Dorsolateral prefrontal cortex (tissue), 120 donors: ENCODE measurements at regions of chr3 and their contacts with region 1.

Region 1: GRCh38 chr3:79019137-79019923 is 748.5 kb downstream of the ROBO1 start:
- DNase-seq: peak; percentile 59 to 90 (median 86)
- H3K4me3 ChIP-seq: peak overlapping the region; percentile 35 to 97 (median 85)
- H3K27ac ChIP-seq: peak overlapping the region; percentile 66 to 98 (median 91)
- H3K27me3 ChIP-seq: no peaks in the 10 kb centered on the region
- CTCF ChIP-seq: peak in 8 of 56 donors; percentile 3 to 22 (median 8)

Region 2: DNA sequence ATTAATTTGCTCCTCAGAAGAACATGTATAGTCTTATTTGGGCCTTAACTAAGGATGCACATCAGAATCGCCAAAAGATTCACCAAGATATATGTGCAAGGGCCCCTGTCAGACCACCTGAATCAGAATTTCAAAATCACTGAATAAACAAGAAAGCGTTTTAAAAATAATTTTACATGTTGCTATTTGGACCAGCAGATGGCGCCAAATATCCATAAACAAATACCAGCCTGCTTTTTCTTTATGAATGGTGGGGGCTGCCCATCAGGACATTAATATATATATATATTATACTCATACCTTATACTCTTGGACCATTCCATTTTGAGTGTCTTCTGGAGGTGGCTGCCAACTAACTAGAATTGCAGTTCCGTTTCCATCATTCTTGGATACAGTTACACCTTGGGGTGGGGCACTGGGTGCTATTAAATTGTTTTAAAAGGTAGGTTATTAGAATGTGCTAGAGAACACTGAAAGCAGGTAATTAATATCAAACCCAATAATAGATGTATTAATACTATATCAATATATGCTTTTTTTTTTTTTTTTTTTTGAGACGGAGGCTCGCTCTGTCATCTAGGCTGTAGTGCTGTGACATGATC is 359.8 kb before region 1 on chr3:
- intact Hi-C with region 1: loop called (anchors 5 kb)
- DNase-seq: peak in 2 of 10 donors; percentile 31 to 39
- H3K4me3 ChIP-seq: no peak overlapping the region
- H3K27ac ChIP-seq: peak overlapping the region in 2 of 59 donors; percentile 32 to 38
- H3K27me3 ChIP-seq: no peaks in the 10 kb centered on the region
- CTCF ChIP-seq: peak; percentile 67 to 97 (median 81)

Region 3: DNA sequence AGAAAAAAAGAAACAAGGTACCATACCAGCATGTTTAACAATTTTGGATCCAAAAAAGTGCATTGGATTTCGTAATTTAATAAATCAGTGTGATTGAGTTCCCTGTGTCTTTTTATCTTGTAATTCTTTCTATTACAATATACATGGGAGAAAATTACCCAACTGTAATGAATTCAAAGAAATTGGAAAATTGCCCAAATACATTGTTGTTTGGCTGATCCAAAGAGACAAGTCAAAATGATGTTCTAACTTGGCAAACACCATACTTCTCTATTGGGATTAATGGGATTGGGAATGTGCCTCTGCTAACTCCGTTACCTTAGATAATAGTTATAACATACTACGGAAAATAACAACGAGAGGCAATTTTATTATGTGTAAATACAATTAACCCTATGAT is 348.6 kb before region 1 on chr3:
- intact Hi-C with region 1: no loop called
- DNase-seq: no peak
- H3K4me3 ChIP-seq: peak overlapping the region in 41 of 59 donors; percentile 6 to 62 (median 44)
- H3K27ac ChIP-seq: peak overlapping the region in 18 of 59 donors; percentile 0 to 68 (median 39)
- H3K27me3 ChIP-seq: no peaks in the 10 kb centered on the region
- CTCF ChIP-seq: no peak

Region 4: GRCh38 chr3:78728406-78729145 is 290.8 kb before region 1 on chr3:
- intact Hi-C with region 1: loop called in 1 of 2 experiments (anchors 10 kb)
- DNase-seq: peak; percentile 65 to 91 (median 84)
- H3K4me3 ChIP-seq: peak overlapping the region in 35 of 59 donors; percentile 0 to 53 (median 23)
- H3K27ac ChIP-seq: peak overlapping the region; percentile 5 to 92 (median 78)
- H3K27me3 ChIP-seq: no peaks in the 10 kb centered on the region
- CTCF ChIP-seq: peak in 7 of 56 donors; percentile 5 to 29 (median 15)

Region 5: GRCh38 chr3:78754066-78754743 is 265.1 kb before region 1 on chr3:
- intact Hi-C with region 1: loop called in 1 of 2 experiments (anchors 10 kb)
- DNase-seq: no peak
- H3K4me3 ChIP-seq: peak overlapping the region in 31 of 59 donors; percentile 0 to 46 (median 21)
- H3K27ac ChIP-seq: peak overlapping the region in 58 of 59 donors; percentile 48 to 96 (median 86)
- H3K27me3 ChIP-seq: no peaks in the 10 kb centered on the region
- CTCF ChIP-seq: peak in 1 of 56 donors; percentile 25

Region 6: GRCh38 chr3:78880603-78881461 is 138.5 kb before region 1 on chr3:
- intact Hi-C with region 1: loop called (anchors 5 to 10 kb)
- DNase-seq: peak in 1 of 10 donors; percentile 37
- H3K4me3 ChIP-seq: peak overlapping the region in 55 of 59 donors; percentile 0 to 61 (median 32)
- H3K27ac ChIP-seq: peak overlapping the region in 58 of 59 donors; percentile 25 to 92 (median 79)
- H3K27me3 ChIP-seq: no peaks in the 10 kb centered on the region
- CTCF ChIP-seq: peak in 1 of 56 donors; percentile 11

Region 7: GRCh38 chr3:78887547-78888011 is 131.8 kb before region 1 on chr3:
- intact Hi-C with region 1: loop called (anchors 5 to 10 kb)
- DNase-seq: no peak
- H3K4me3 ChIP-seq: peak overlapping the region in 17 of 59 donors; percentile 1 to 47 (median 17)
- H3K27ac ChIP-seq: peak overlapping the region in 20 of 59 donors; percentile 0 to 73 (median 38)
- H3K27me3 ChIP-seq: no peaks in the 10 kb centered on the region
- CTCF ChIP-seq: no peak

Region 8: DNA sequence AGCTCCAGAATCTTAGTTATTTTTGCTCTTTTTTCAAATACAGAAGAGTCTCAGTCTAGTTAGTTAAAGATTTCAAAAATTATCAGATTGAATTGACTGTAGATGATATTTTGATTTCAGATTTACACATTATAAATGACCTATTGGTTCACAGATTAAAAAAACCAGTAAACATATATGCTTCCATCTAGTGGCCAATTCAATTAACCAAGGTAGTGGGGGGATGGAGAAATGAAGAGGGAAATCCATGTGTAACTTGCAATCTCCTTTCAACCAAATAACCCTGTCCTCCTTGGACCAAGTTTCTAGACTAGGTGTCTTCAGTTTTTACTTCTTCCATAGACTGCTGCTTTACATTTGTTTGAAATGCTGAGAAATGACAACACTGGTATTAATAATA is 41.3 kb before region 1 on chr3:
- intact Hi-C with region 1: loop called in 1 of 2 experiments (anchors 5 kb)
- DNase-seq: no peak
- H3K4me3 ChIP-seq: no peak overlapping the region
- H3K27ac ChIP-seq: no peak overlapping the region
- H3K27me3 ChIP-seq: no peaks in the 10 kb centered on the region
- CTCF ChIP-seq: peak in 51 of 56 donors; percentile 14 to 71 (median 48)

Region 9: DNA sequence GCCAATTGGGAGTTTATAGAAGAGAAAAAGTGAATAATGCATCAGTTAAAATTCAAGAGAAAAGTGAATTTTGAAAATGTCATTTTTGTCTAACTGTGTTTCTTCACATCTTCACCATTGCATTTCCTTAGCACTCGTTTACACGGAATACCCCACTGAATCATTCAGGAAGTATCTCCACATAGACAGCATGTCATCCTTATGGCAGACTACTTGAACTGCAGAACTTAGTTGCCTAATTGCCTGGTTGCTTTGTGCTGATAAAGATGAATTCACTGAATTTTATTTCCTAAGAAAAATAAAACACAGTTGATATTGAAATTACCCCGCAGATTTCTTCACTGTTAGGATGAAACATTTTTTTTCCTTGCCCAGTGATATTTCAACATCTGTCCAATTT is 121.4 kb after region 1 on chr3:
- intact Hi-C with region 1: no loop called
- DNase-seq: no peak
- H3K4me3 ChIP-seq: no peak overlapping the region
- H3K27ac ChIP-seq: no peak overlapping the region
- H3K27me3 ChIP-seq: peaks cover 0 to 4% (median 0%) of the 10 kb centered on the region in 45 donors
- CTCF ChIP-seq: no peak